Thyroid gland (tissue), 4 donors: ENCODE measurements at regions of chr11 and their contacts with region 1.

Region 1: GRCh38 chr11:2428322-2428795 is 16.0 kb downstream of the TRPM5 start:
- DNase-seq: peak; percentile 82 to 87
- H3K4me3 ChIP-seq: no peak overlapping the region
- H3K27ac ChIP-seq: no peak overlapping the region
- H3K4me1 ChIP-seq: peaks cover 0 to 9% of the 10 kb centered on the region in 2 donors
- H3K27me3 ChIP-seq: no peaks in the 10 kb centered on the region
- CTCF ChIP-seq: peak; percentile 80 to 99 (median 94)
- POLR2A ChIP-seq: no peak

Region 2: GRCh38 chr11:2074266-2074825 is 354.0 kb before region 1 on chr11:
- intact Hi-C with region 1: no loop called
- DNase-seq: no peak
- H3K4me3 ChIP-seq: no peak overlapping the region
- H3K27ac ChIP-seq: no peak overlapping the region
- H3K4me1 ChIP-seq: no peaks in the 10 kb centered on the region
- H3K27me3 ChIP-seq: no peaks in the 10 kb centered on the region
- CTCF ChIP-seq: no peak
- POLR2A ChIP-seq: no peak

Region 3: GRCh38 chr11:2348986-2349385 is 79.4 kb before region 1 on chr11:
- intact Hi-C with region 1: no loop called
- DNase-seq: no peak
- H3K4me3 ChIP-seq: no peak overlapping the region
- H3K27ac ChIP-seq: no peak overlapping the region
- H3K4me1 ChIP-seq: no peaks in the 10 kb centered on the region
- H3K27me3 ChIP-seq: no peaks in the 10 kb centered on the region
- CTCF ChIP-seq: no peak
- POLR2A ChIP-seq: no peak

Region 4: GRCh38 chr11:2532704-2533586 is 104.6 kb after region 1 on chr11:
- intact Hi-C with region 1: loop called (anchors 2 kb)
- DNase-seq: peak; percentile 89
- H3K4me3 ChIP-seq: no peak overlapping the region
- H3K27ac ChIP-seq: no peak overlapping the region
- H3K4me1 ChIP-seq: peaks cover 5 to 17% of the 10 kb centered on the region in 2 donors
- H3K27me3 ChIP-seq: no peaks in the 10 kb centered on the region
- CTCF ChIP-seq: peak; percentile 91 to 99 (median 98)
- POLR2A ChIP-seq: no peak